ENCODE measurements at regions of chr20 and their contacts with region 1.

Region 1: GRCh38 chr20:25178563-25179438 is 16.7 kb upstream of the ENTPD6 start:
- DNase-seq: peak in 1 of 2 donors; percentile 71
- H3K4me3 ChIP-seq: no peak overlapping the region
- H3K27ac ChIP-seq: peak overlapping the region; percentile 9 to 22
- H3K4me1 ChIP-seq: peaks cover 0 to 4% of the 10 kb centered on the region in 2 donors
- H3K27me3 ChIP-seq: no peaks in the 10 kb centered on the region
- CTCF ChIP-seq: peak; percentile 52 to 76 (median 67)

Region 2: DNA sequence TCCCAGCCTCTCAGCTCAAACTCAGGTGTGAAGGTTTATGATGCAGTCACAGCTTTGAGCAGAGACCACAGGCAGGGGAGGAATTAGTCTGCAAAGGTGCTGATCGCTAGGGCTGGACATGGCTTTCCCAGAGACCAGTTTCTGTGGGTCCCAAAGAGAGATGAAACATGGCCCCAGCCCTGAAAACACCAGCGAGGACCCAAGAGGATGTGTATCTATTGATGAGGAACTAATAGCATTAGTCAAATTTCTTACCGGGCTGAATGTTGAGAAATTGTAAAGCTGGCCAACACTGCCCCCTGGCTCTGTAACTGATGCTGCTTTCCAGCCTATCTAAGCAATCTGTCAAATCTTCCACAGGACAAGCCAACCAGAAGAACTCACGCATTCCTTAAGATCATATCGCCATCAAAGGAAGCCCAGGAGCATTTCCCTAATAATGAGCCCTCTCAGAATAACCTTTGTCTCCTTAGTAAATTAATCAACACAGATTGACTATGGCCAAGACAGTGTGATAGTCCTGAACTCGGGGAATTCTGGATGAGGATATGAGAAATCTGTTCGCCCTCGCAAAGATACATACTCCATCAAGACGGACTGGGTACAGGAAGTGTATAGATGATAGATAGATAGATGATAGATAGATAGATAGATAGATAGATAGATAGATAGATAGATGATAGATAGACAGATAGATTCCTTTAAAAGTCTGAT is 113.0 kb before region 1 on chr20:
- intact Hi-C with region 1: loop called (anchors 2 kb)
- DNase-seq: peak in 1 of 2 donors; percentile 85
- H3K4me3 ChIP-seq: no peak overlapping the region
- H3K27ac ChIP-seq: no peak overlapping the region
- H3K4me1 ChIP-seq: no peaks in the 10 kb centered on the region
- H3K27me3 ChIP-seq: no peaks in the 10 kb centered on the region
- CTCF ChIP-seq: peak; percentile 72 to 85 (median 78)

Region 3: GRCh38 chr20:25083773-25084625 is 94.8 kb before region 1 on chr20:
- intact Hi-C with region 1: loop called (anchors 2 kb)
- DNase-seq: no peak
- H3K4me3 ChIP-seq: peak overlapping the region in 1 of 2 donors; percentile 1
- H3K27ac ChIP-seq: no peak overlapping the region
- H3K4me1 ChIP-seq: peaks cover 6 to 12% of the 10 kb centered on the region in 2 donors
- H3K27me3 ChIP-seq: peaks cover 40% of the 10 kb centered on the region
- CTCF ChIP-seq: peak in 1 of 3 experiments; percentile 30

Region 4: GRCh38 chr20:25126630-25127029 is 52.2 kb before region 1 on chr20:
- intact Hi-C with region 1: no loop called
- DNase-seq: no peak
- H3K4me3 ChIP-seq: no peak overlapping the region
- H3K27ac ChIP-seq: no peak overlapping the region
- H3K4me1 ChIP-seq: no peaks in the 10 kb centered on the region
- H3K27me3 ChIP-seq: no peaks in the 10 kb centered on the region
- CTCF ChIP-seq: no peak

Region 5: GRCh38 chr20:25136643-25137559 is 41.9 kb before region 1 on chr20:
- intact Hi-C with region 1: loop called (anchors 2 kb)
- DNase-seq: peak; percentile 40 to 90
- H3K4me3 ChIP-seq: no peak overlapping the region
- H3K27ac ChIP-seq: peak overlapping the region in 1 of 2 donors; percentile 26
- H3K4me1 ChIP-seq: peaks cover 0 to 3% of the 10 kb centered on the region in 2 donors
- H3K27me3 ChIP-seq: no peaks in the 10 kb centered on the region
- CTCF ChIP-seq: no peak

Region 6: DNA sequence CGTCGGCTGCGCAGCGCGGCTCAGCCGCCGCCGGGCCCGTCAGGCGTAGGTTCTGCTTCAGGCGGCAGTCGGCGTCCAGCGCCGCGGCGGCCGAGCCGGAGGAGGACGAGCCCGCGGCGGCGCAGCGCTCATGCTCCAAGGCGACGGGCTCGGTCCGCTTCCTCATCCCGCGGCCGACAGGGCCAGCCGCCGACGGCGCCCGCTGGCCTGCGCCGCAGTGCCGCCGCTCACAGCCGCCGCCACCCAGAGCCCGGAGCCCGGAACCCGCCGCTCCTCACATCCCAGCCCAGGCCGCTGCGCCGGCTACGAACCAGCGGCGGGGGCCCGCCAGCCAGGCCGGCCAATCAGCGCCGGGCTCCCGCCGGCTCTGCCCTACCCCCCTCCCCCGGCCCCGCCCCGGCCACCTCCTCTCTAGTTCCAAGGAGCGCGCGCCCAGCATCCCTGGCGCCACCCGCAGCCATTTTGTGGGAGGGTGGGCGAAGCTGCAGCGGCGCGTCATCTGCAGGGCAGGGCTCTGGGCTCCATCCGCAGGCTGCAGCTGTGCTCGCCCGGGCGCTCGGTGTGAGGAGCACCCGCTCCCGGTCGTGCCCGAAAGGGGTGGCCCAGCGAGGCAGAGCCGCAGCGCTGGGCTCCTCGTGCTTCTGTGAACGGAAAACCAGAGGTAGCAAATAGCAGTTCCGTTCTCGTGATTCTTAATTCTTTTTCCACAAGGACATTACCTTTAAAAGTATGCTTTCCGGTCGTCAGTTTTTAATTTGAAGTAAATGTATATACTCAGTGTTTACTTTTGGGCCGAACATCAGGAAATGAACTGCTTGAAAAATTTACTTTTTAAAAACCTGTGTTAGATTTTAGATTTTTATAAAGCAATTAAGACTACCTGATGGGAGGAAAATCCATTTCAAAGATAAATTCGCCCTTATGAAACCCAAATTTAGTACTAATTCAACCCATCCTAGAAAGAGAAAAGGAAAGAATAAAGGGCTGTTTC is 212.0 kb after region 1 on chr20 and contains the start of gene ABHD12:
- intact Hi-C with region 1: loop called (anchors 5 kb)
- DNase-seq: peak; percentile 91 to 99
- H3K4me3 ChIP-seq: peak within 1 kb of the TSS; percentile 83 to 99
- H3K27ac ChIP-seq: peak within 1 kb of the TSS; percentile 70 to 91
- H3K4me1 ChIP-seq: peaks cover 0 to 3% of the 10 kb centered on the region in 2 donors
- H3K27me3 ChIP-seq: no peaks in the 10 kb centered on the region
- CTCF ChIP-seq: no peak
- total RNA-seq, gene ABHD12: 24.3 TPM